ENCODE measurements at regions of chr2 and their contacts with region 1.

Region 1: GRCh38 chr2:43927442-43927841 is 68.3 kb downstream of the LRPPRC start:
- DNase-seq: no peak
- H3K4me3 Mint-ChIP-seq: peak overlapping the region; percentile 1
- H3K27ac Mint-ChIP-seq: no peak overlapping the region
- H3K4me1 Mint-ChIP-seq: peaks cover 15% of the 10 kb centered on the region
- H3K27me3 Mint-ChIP-seq: no peaks in the 10 kb centered on the region

Region 2: GRCh38 chr2:43877782-43878464 is 49.5 kb before region 1 on chr2:
- intact Hi-C with region 1: loop called (anchors 5 kb)
- DNase-seq: peak; percentile 62
- H3K4me3 Mint-ChIP-seq: no peak overlapping the region
- H3K27ac Mint-ChIP-seq: no peak overlapping the region
- H3K4me1 Mint-ChIP-seq: peaks cover 11% of the 10 kb centered on the region
- H3K27me3 Mint-ChIP-seq: no peaks in the 10 kb centered on the region

Region 3: GRCh38 chr2:44267796-44268648 is 340.6 kb after region 1 on chr2:
- intact Hi-C with region 1: no loop called
- DNase-seq: no peak
- H3K4me3 Mint-ChIP-seq: no peak overlapping the region
- H3K27ac Mint-ChIP-seq: no peak overlapping the region
- H3K4me1 Mint-ChIP-seq: no peaks in the 10 kb centered on the region
- H3K27me3 Mint-ChIP-seq: peaks cover 8% of the 10 kb centered on the region

Measured in activated T-helper 2 cell treated with anti-CD3 and anti-CD28 coated beads, Interferon-gamma antibody, Interleukin-2, Interleukin-4, amounts not matched to agents 10 μg/mL and 5 μg/mL and 100 μg/mL, durations not matched to agents 14 hours and 24 hours and 36 hours (primary cell).